Calu3 (cell line): ENCODE measurements at regions of chr19 and their contacts with region 1.

Region 1: GRCh38 chr19:45730389-45731288 is at the start of gene FBXO46:
- DNase-seq: peak; percentile 97
- H3K4me3 Mint-ChIP-seq: peak within 1 kb of the TSS; percentile 97
- H3K27ac Mint-ChIP-seq: peak within 1 kb of the TSS; percentile 83
- H3K4me1 Mint-ChIP-seq: peaks cover 26% of the 10 kb centered on the region
- H3K27me3 Mint-ChIP-seq: no peaks in the 10 kb centered on the region
- CTCF ChIP-seq: no peak
- total RNA-seq, gene FBXO46: 43.8 and 53.6 TPM in 2 replicates

Region 2: GRCh38 chr19:45692187-45693105 is 38.2 kb before region 1 on chr19 and contains the start of gene QPCTL:
- CTCF ChIA-PET with region 1: interaction called, 13 read pairs
- intact Hi-C with region 1: no loop called
- DNase-seq: peak; percentile 99
- H3K4me3 Mint-ChIP-seq: peak within 1 kb of the TSS; percentile 82
- H3K27ac Mint-ChIP-seq: peak within 1 kb of the TSS; percentile 90
- H3K4me1 Mint-ChIP-seq: peaks cover 3% of the 10 kb centered on the region
- H3K27me3 Mint-ChIP-seq: no peaks in the 10 kb centered on the region
- CTCF ChIP-seq: no peak
- total RNA-seq, gene QPCTL: 20.4 and 20.7 TPM in 2 replicates